Spleen (tissue), 13 donors: ENCODE measurements at regions of chr2 and their contacts with region 1.

Region 1: GRCh38 chr2:96951093-96951654 is 35.2 kb downstream of the FAM178B start:
- DNase-seq: peak; percentile 92
- H3K4me3 ChIP-seq: no peak overlapping the region
- H3K27ac ChIP-seq: no peak overlapping the region
- H3K4me1 ChIP-seq: peaks cover 27 to 61% (median 49%) of the 10 kb centered on the region in 6 donors
- H3K27me3 ChIP-seq: peaks cover 0 to 24% (median 0%) of the 10 kb centered on the region in 7 donors
- CTCF ChIP-seq: peak; percentile 83 to 94 (median 88)
- POLR2A ChIP-seq: no peak

Region 2: DNA sequence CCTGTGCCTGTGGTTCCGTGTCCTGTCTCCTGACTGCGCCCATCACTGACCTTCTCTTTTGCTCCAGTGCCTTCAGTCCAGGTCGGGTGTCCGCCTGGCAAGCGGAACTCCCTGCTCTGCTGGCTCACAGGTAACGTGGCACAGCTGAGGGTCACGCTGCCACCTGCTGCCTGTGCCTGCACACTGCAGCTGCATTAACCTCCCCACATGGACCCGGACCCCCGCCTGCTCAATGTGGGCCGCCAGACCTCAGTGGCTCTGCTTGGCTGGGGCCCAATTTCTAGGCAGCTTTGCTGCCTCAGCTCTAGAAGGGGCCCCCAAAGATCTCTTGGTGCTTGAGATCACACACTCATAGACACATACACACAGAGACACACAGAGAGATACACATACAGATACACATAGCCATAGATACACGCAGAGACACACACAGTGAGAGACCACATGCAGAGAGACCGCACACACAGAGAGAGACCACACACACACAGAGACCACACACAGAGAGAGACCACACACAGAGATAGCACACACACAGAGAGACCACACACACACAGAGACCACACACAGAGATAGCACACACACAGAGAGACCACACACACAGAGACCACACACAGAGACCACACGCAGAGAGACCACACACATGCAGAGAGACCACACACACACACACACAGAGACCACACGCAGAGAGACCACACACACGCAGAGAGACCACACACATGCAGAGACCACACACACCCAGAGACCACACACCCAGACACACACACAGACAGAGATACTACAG is 150.0 kb before region 1 on chr2:
- intact Hi-C with region 1: no loop called
- DNase-seq: peak; percentile 94
- H3K4me3 ChIP-seq: no peak overlapping the region
- H3K27ac ChIP-seq: peak overlapping the region in 3 of 8 donors; percentile 8 to 81 (median 35)
- H3K4me1 ChIP-seq: peaks cover 6 to 42% (median 22%) of the 10 kb centered on the region in 6 donors
- H3K27me3 ChIP-seq: no peaks in the 10 kb centered on the region
- CTCF ChIP-seq: peak; percentile 84 to 93 (median 90)
- POLR2A ChIP-seq: no peak

Region 3: GRCh38 chr2:96816128-96816835 is 134.9 kb before region 1 on chr2 and contains the start of gene CNNM3:
- intact Hi-C with region 1: no loop called
- DNase-seq: peak; percentile 99
- H3K4me3 ChIP-seq: peak within 1 kb of the TSS; percentile 72 to 91 (median 80)
- H3K27ac ChIP-seq: peak within 1 kb of the TSS; percentile 96 to 99 (median 98)
- H3K4me1 ChIP-seq: peaks cover 45 to 54% (median 50%) of the 10 kb centered on the region in 6 donors
- H3K27me3 ChIP-seq: no peaks in the 10 kb centered on the region
- CTCF ChIP-seq: peak; percentile 65 to 95 (median 87)
- POLR2A ChIP-seq: peak in 2 of 3 donors; percentile 78 to 89
- total RNA-seq, gene CNNM3: 20.7 to 37.8 (median 25.6) TPM

Region 4: GRCh38 chr2:96846825-96847224 is 104.3 kb before region 1 on chr2:
- intact Hi-C with region 1: no loop called
- DNase-seq: no peak
- H3K4me3 ChIP-seq: no peak overlapping the region
- H3K27ac ChIP-seq: no peak overlapping the region
- H3K4me1 ChIP-seq: peaks cover 0 to 16% (median 2%) of the 10 kb centered on the region in 6 donors
- H3K27me3 ChIP-seq: no peaks in the 10 kb centered on the region
- CTCF ChIP-seq: no peak
- POLR2A ChIP-seq: no peak

Region 5: GRCh38 chr2:96856776-96857673 is 94.1 kb before region 1 on chr2:
- intact Hi-C with region 1: loop called (anchors 5 kb)
- DNase-seq: no peak
- H3K4me3 ChIP-seq: peak overlapping the region; percentile 50 to 85 (median 78)
- H3K27ac ChIP-seq: peak overlapping the region; percentile 74 to 95 (median 90)
- H3K4me1 ChIP-seq: peaks cover 32 to 76% (median 55%) of the 10 kb centered on the region in 6 donors
- H3K27me3 ChIP-seq: peaks cover 0 to 10% (median 0%) of the 10 kb centered on the region in 7 donors
- CTCF ChIP-seq: no peak
- POLR2A ChIP-seq: no peak

Region 6: DNA sequence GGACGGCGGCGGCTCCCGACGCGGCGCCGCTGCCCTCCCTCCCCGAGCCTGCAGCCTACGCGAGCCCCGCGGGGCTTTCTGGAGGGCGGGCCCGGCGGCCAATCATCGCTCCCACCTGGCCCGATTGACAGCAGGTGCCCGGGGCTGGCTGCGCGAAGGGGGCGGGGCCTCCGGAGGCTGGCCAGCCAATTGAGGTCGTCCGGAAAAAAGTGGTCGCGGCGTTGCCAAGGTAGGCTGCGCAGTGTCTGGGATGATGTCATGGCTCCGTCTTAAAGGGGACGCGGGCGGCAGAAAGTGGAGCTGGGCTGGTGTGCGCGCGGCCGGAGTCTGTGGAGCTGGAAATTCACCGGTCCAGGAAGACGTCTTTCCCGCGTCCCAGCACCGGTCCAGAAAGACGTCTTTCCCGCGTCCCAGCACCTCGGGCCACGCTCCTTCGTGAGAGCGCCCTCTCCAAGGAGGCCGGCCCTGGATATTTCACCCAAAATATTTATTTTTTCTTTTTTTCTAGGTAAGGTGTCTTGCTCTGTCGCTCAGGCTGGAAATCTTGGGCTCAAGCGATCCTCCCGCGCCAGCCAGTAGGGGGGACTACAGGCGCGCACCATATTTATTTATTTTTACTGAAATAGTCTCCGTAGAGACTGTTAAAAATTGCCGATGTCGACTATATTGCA is 712.9 kb after region 1 on chr2 and contains the start of gene ACTR1B:
- intact Hi-C with region 1: no loop called
- DNase-seq: peak; percentile 99
- H3K4me3 ChIP-seq: peak within 1 kb of the TSS; percentile 54 to 79 (median 70)
- H3K27ac ChIP-seq: peak within 1 kb of the TSS; percentile 90 to 98 (median 96)
- H3K4me1 ChIP-seq: peaks cover 20 to 52% (median 43%) of the 10 kb centered on the region in 6 donors
- H3K27me3 ChIP-seq: no peaks in the 10 kb centered on the region
- CTCF ChIP-seq: peak; percentile 25 to 68 (median 45)
- POLR2A ChIP-seq: peak in 2 of 3 donors; percentile 71 to 91
- total RNA-seq, gene ACTR1B: 70.8 to 101 (median 78.0) TPM